ENCODE measurements at regions of chrX and their contacts with region 1.

Region 1: GRCh38 chrX:8374041-8374825 is 90.4 kb upstream of the VCX3B start:
- DNase-seq: no peak

Region 2: DNA sequence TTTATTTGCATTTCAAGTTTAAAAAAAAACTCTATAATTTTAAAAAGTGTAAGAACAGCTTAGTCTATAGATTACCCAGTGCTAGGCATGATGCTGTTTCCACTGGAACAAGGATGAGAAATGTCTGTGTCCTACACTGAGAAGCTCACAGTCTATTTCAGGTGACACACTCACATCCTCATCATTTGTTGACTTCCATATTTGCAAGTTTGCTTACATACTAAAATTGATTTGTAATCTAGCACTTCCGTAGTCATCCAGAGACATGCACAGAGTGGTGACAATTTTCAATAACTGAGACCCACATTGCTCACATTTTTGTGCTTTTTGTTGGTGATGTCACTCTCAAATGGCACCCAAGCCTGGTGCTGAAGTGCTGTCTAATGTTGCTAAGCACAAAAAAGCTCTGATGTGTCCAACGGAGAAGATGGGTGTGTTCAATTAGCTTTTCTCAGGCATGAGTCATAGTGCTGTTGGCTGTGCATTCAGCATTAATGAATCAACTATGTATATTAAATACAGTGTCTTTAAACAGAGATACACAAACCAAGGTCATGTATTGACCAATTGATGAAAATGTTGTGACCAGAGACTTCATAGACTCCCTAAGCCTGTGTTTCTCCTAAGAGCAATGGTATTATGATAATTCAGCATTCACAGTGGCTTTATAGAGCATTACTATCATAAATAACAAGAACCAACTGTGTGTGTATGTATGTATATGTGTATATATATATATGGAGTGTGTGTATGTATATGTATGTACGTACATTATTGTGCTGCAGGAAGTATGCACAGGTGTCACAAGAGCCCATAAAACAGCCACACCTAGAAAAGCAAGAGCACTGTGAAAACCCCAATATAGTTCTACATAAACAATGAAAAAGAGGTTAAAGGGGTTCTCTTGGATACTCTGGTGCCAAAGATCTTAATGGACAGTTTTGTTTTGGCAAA is 59.2 kb after region 1 on chrX:
- intact Hi-C with region 1: loop called (anchors 10 kb)
- DNase-seq: no peak

Region 3: DNA sequence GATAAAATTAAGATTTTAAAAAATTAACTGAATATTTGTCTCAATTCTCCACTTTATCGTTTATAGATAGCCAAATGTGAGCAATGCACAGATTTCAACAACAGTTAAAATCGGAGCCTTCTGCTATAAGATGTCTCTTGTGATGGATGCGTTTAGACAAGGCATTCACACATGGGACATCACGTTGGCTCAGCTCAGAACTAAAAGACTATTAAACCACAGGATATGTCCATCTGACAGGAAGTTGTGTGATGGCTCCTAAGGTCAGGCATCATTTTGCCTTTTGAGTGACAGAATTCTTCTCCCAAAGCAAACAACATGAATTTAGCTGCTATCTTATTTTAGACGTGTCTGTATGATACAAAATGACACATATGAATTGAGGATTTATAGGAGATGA is 73.1 kb after region 1 on chrX:
- intact Hi-C with region 1: no loop called
- DNase-seq: no peak